ENCODE measurements at regions of chrX and their contacts with region 1.

Region 1: GRCh38 chrX:16123222-16123786 is at the start of gene GRPR:
- DNase-seq: peak; percentile 82
- ATAC-seq: peak; percentile 99
- H3K4me3 Mint-ChIP-seq: peak within 1 kb of the TSS; percentile 74
- H3K27ac Mint-ChIP-seq: peak within 1 kb of the TSS; percentile 83
- H3K4me1 Mint-ChIP-seq: peaks cover 45% of the 10 kb centered on the region
- H3K27me3 Mint-ChIP-seq: peaks cover 3% of the 10 kb centered on the region; the same call in 1 of the 2 replicates
- CTCF ChIP-seq: peak; percentile 58
- total RNA-seq, gene GRPR: 8.9 to 18.4 TPM (median 18.0 TPM) in 3 replicates

Region 2: DNA sequence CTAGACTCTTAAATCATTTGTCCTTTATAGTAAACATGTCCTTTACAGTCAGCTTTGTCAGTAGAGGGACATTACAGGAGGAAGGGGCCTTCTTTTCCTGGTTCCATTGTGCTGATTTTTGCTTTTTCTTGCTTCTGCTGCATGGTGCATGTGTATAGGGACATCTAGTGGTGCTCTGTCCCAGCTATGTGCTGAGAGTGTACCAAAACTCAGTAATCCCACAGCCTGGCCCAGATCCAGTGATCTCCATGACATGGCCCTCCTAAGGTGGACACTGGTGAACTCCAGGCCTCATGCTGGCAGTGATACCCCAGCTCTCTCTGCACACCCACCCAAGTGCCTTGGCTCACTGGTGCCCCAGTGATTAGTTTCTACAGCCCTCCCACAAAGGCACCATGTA is 89.1 kb after region 1 on chrX:
- CTCF ChIA-PET with region 1: interaction called, 16 read pairs
- POLR2A ChIA-PET with region 1: no interaction called
- DNase-seq: no peak
- ATAC-seq: peak; percentile 61
- H3K4me3 Mint-ChIP-seq: no peak overlapping the region
- H3K27ac Mint-ChIP-seq: peak overlapping the region; percentile 49; the same call in 1 of the 2 replicates
- H3K4me1 Mint-ChIP-seq: peaks cover 41% of the 10 kb centered on the region
- H3K27me3 Mint-ChIP-seq: no peaks in the 10 kb centered on the region
- CTCF ChIP-seq: no peak

Measured in WTC11 (cell line).